Mammary epithelial cell (primary cell): ENCODE measurements at regions of chr12 and their contacts with region 1.

Region 1: DNA sequence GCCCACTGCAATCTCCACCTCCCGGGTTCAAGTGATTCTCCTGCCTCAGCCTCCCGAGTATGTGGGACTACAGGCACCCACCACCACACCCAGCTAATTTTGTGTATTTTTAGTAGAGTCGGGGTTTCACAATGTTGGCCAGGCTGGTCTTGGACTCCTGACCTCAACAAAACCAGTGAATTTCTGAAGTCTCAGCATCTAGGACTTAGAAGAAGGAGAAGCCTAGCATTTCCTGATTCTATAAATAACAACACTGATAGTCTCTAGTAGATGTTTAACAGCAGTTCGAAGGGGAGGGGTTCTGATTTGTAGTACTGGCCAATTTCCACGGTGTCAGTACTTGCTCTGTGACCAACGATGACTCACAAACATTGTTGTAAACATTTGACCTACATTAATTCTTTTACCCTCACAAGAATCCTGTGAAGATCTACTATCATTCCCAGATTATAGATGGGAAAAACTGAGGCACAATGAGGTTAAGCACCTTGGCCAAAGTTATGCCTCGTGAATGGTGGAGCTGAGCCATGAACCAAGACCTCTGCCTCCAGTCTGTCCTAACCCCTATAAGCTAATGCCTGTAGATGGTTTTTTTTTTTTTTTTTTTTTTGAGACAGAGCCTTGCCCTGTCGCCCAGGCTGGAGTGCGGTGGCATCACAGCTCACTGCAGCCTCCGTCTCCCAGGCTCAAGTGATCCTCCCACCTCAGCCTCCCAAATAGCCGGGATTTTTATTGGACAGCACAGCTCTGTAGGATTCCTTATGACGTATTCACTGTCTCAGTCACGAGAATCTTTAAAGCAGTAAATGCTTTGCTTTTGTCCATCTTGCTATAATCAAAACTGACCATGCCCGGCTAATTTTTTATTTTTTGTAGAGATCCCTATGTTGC is 5.2 kb downstream of the P2RX4 start:
- DNase-seq: peak; percentile 77
- H3K4me3 ChIP-seq: no peak overlapping the region
- H3K27ac ChIP-seq: no peak overlapping the region
- H3K4me1 ChIP-seq: peaks cover 18% of the 10 kb centered on the region
- H3K27me3 ChIP-seq: no peaks in the 10 kb centered on the region
- CTCF ChIP-seq: no peak

Region 2: GRCh38 chr12:121145221-121145620 is 69.9 kb before region 1 on chr12:
- CTCF ChIA-PET with region 1: no interaction called
- dilution Hi-C with region 1: loop called (anchors 5 kb)
- in situ Hi-C with region 1: no loop called
- intact Hi-C with region 1: no loop called
- DNase-seq: no peak
- H3K4me3 ChIP-seq: no peak overlapping the region
- H3K27ac ChIP-seq: no peak overlapping the region
- H3K4me1 ChIP-seq: no peaks in the 10 kb centered on the region
- H3K27me3 ChIP-seq: no peaks in the 10 kb centered on the region
- CTCF ChIP-seq: no peak